CD4-positive, alpha-beta memory T cell (primary cell): ENCODE measurements at regions of chr19 and their contacts with region 1.

Region 1: GRCh38 chr19:20423381-20424197 is 142.0 kb downstream of the ZNF737 start:
- DNase-seq: peak; percentile 9 to 36 (median 29)
- H3K4me3 ChIP-seq: peak overlapping the region; percentile 78 to 81
- H3K4me3 Mint-ChIP-seq: peak overlapping the region; percentile 91 to 99 (median 97)
- H3K27ac ChIP-seq: peak overlapping the region; percentile 43
- H3K27ac Mint-ChIP-seq: peak overlapping the region; percentile 89 to 98 (median 93)
- H3K4me1 ChIP-seq: no peaks in the 10 kb centered on the region
- H3K4me1 Mint-ChIP-seq: peaks cover 3 to 31% (median 17%) of the 10 kb centered on the region in 4 donors
- H3K27me3 ChIP-seq: no peaks in the 10 kb centered on the region
- H3K27me3 Mint-ChIP-seq: no peaks in the 10 kb centered on the region

Region 2: GRCh38 chr19:20167020-20167644 is 256.5 kb before region 1 on chr19 and contains the start of gene ZNF486:
- CTCF ChIA-PET with region 1: no interaction called
- POLR2A ChIA-PET with region 1: interaction called, 12 read pairs
- intact Hi-C with region 1: no loop called
- DNase-seq: peak; percentile 90 to 95 (median 93)
- H3K4me3 ChIP-seq: peak within 1 kb of the TSS; percentile 39 to 87
- H3K4me3 Mint-ChIP-seq: peak within 1 kb of the TSS; percentile 95 to 99 (median 98)
- H3K27ac ChIP-seq: peak within 1 kb of the TSS; percentile 73
- H3K27ac Mint-ChIP-seq: peak within 1 kb of the TSS; percentile 89 to 97 (median 94)
- H3K4me1 ChIP-seq: peaks cover 21% of the 10 kb centered on the region
- H3K4me1 Mint-ChIP-seq: peaks cover 24 to 55% (median 40%) of the 10 kb centered on the region in 4 donors
- H3K27me3 ChIP-seq: no peaks in the 10 kb centered on the region
- H3K27me3 Mint-ChIP-seq: no peaks in the 10 kb centered on the region
- total RNA-seq, gene ZNF486: 11.0 to 11.7 TPM

Region 3: GRCh38 chr19:20482721-20483120 is 59.1 kb after region 1 on chr19:
- CTCF ChIA-PET with region 1: interaction called, 3 read pairs
- POLR2A ChIA-PET with region 1: interaction called, 26 read pairs
- intact Hi-C with region 1: no loop called
- DNase-seq: peak in 4 of 5 donors; percentile 11 to 55 (median 41)
- H3K4me3 ChIP-seq: no peak overlapping the region
- H3K4me3 Mint-ChIP-seq: peak overlapping the region in 7 of 8 donors; percentile 12 to 83 (median 59)
- H3K27ac ChIP-seq: no peak overlapping the region
- H3K27ac Mint-ChIP-seq: peak overlapping the region in 3 of 7 donors; percentile 22 to 52 (median 36)
- H3K4me1 ChIP-seq: peaks cover 14% of the 10 kb centered on the region
- H3K4me1 Mint-ChIP-seq: peaks cover 4 to 36% (median 20%) of the 10 kb centered on the region in 4 donors
- H3K27me3 ChIP-seq: no peaks in the 10 kb centered on the region
- H3K27me3 Mint-ChIP-seq: no peaks in the 10 kb centered on the region

Region 4: DNA sequence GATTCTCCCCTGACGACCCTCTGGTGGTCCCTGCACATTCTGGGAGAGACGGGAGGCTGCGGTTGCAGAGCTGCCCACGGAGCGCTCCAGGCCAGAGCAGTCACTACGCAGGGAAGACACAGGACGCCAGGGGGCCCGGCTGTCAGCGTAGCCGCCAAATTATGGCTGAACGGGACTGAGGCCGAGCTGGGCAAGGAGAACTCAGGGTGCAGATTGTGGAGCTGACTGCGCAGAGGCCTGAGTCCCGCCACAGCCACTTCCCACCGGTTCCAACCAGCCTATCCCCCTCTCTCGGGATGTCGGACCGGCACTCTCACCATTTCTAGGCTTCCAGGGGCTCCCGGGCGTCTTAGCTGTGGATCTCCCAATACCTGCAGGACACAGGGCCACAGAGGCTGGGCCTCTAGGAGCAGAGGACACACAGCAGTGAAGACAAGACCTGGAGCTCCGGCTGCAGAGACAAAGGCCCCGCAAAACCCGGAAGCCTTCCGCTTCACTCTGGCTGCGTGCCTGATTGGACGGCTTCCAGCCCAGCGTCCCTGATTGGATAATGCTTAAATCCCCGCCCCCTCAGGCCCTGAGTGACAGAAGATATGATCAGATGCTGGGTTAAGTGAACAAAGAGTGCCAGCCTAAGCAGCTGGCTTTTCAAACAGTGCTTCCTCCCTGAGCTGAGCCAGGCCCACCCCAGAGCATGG is 141.9 kb after region 1 on chr19 and contains the start of gene ZNF737:
- CTCF ChIA-PET with region 1: interaction called, 9 read pairs
- POLR2A ChIA-PET with region 1: interaction called, 34 read pairs
- intact Hi-C with region 1: loop called (anchors 2 kb)
- DNase-seq: peak; percentile 91 to 95 (median 93)
- H3K4me3 ChIP-seq: peak within 1 kb of the TSS; percentile 57 to 95
- H3K4me3 Mint-ChIP-seq: peak within 1 kb of the TSS; percentile 99 to 100 (median 99)
- H3K27ac ChIP-seq: peak within 1 kb of the TSS; percentile 73
- H3K27ac Mint-ChIP-seq: peak within 1 kb of the TSS; percentile 97 to 99 (median 98)
- H3K4me1 ChIP-seq: no peaks in the 10 kb centered on the region
- H3K4me1 Mint-ChIP-seq: peaks cover 12 to 43% (median 29%) of the 10 kb centered on the region in 4 donors
- H3K27me3 ChIP-seq: no peaks in the 10 kb centered on the region
- H3K27me3 Mint-ChIP-seq: no peaks in the 10 kb centered on the region
- total RNA-seq, gene ZNF737: 41.3 to 44.7 TPM

Region 5: GRCh38 chr19:20776083-20777076 is 352.8 kb after region 1 on chr19 and contains the start of gene ZNF66:
- CTCF ChIA-PET with region 1: no interaction called
- POLR2A ChIA-PET with region 1: interaction called, 4 read pairs
- intact Hi-C with region 1: loop called (anchors 10 kb)
- DNase-seq: peak; percentile 93 to 96 (median 95)
- H3K4me3 ChIP-seq: peak within 1 kb of the TSS; percentile 79 to 85
- H3K4me3 Mint-ChIP-seq: peak within 1 kb of the TSS; percentile 94 to 100 (median 99)
- H3K27ac ChIP-seq: peak within 1 kb of the TSS; percentile 74
- H3K27ac Mint-ChIP-seq: peak within 1 kb of the TSS; percentile 87 to 99 (median 98)
- H3K4me1 ChIP-seq: peaks cover 6% of the 10 kb centered on the region
- H3K4me1 Mint-ChIP-seq: peaks cover 13 to 37% (median 20%) of the 10 kb centered on the region in 4 donors
- H3K27me3 ChIP-seq: no peaks in the 10 kb centered on the region
- H3K27me3 Mint-ChIP-seq: no peaks in the 10 kb centered on the region
- total RNA-seq, gene ZNF66: 14.7 to 17.1 TPM

Region 6: DNA sequence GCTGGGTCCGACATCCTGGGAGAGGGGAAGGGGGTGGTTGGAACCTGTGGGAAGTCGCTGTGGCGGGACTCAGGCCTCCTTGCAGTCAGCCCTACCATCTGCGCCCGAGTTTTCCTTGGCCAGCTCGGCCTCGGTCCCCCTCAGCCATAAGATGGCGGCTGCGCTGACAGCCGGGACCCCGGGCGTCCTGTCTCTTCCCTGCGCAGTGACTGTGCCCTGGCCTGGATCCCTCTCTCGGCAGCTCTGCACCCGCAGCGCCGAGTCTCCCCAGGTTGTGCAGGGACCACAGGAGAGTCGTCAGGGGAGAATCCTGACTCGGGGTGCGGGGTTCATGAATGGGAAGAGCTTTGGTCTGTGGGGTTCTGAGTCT is 1629.0 kb after region 1 on chr19:
- CTCF ChIA-PET with region 1: no interaction called
- POLR2A ChIA-PET with region 1: no interaction called
- intact Hi-C with region 1: no loop called
- DNase-seq: no peak
- H3K4me3 ChIP-seq: peak overlapping the region; percentile 61 to 76
- H3K4me3 Mint-ChIP-seq: peak overlapping the region; percentile 92 to 98 (median 96)
- H3K27ac ChIP-seq: peak overlapping the region; percentile 53
- H3K27ac Mint-ChIP-seq: peak overlapping the region; percentile 88 to 95 (median 94)
- H3K4me1 ChIP-seq: no peaks in the 10 kb centered on the region
- H3K4me1 Mint-ChIP-seq: peaks cover 6 to 20% (median 10%) of the 10 kb centered on the region in 4 donors
- H3K27me3 ChIP-seq: no peaks in the 10 kb centered on the region
- H3K27me3 Mint-ChIP-seq: no peaks in the 10 kb centered on the region